ENCODE measurements at regions of chr17 and their contacts with region 1.

Region 1: DNA sequence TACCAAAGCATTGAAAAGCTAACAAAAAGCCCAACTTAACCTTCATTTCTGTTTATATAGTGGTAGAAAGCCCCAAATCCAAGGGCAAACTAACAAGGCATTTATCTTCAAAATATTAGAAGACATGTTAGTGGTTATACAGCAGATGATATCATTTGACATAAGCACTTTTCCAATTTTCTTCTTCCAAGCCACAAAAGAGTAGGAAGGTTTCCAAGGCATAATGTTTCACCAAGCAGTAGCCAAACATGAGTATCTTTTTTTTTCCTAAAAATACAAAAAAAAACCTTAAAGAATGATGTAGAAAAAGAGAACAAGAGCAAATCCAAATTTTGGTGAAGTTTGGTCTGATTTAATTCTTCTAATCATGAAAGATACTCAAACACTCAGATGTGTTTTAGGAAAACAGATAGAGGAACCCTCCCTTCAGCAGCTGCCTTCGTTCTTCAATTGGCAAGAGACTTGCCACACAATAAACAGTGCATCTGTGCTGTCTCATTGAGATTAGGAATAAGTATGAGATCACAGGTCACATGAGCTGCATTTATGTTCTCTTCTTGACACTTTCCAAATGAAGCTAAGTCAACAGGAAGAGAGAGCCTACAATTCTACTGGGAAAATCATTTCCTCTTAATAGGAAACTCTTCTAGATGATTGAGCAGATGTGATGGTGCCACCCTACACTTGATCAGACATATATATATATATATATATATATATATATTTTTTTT is 106.7 kb downstream of the TTC19 start:
- DNase-seq: no peak
- ATAC-seq: no peak
- H3K4me3 ChIP-seq: no peak overlapping the region
- H3K27ac ChIP-seq: no peak overlapping the region
- H3K4me1 ChIP-seq: peaks cover 18% of the 10 kb centered on the region
- H3K27me3 ChIP-seq: no peaks in the 10 kb centered on the region
- CTCF ChIP-seq: no peak

Region 2: GRCh38 chr17:16052486-16052885 is 53.8 kb before region 1 on chr17:
- CTCF ChIA-PET with region 1: no interaction called
- POLR2A ChIA-PET with region 1: no interaction called
- intact Hi-C with region 1: no loop called
- DNase-seq: no peak
- ATAC-seq: no peak
- H3K4me3 ChIP-seq: no peak overlapping the region
- H3K27ac ChIP-seq: no peak overlapping the region
- H3K4me1 ChIP-seq: no peaks in the 10 kb centered on the region
- H3K27me3 ChIP-seq: no peaks in the 10 kb centered on the region
- CTCF ChIP-seq: no peak

Region 3: GRCh38 chr17:16085066-16085699 is 21.1 kb before region 1 on chr17:
- CTCF ChIA-PET with region 1: no interaction called
- POLR2A ChIA-PET with region 1: no interaction called
- intact Hi-C with region 1: no loop called
- DNase-seq: peak; percentile 57
- ATAC-seq: peak; percentile 78
- H3K4me3 ChIP-seq: no peak overlapping the region
- H3K27ac ChIP-seq: peak overlapping the region; percentile 23
- H3K4me1 ChIP-seq: peaks cover 10% of the 10 kb centered on the region
- H3K27me3 ChIP-seq: no peaks in the 10 kb centered on the region
- CTCF ChIP-seq: no peak

Region 4: GRCh38 chr17:16122697-16123434 is 16.5 kb after region 1 on chr17:
- CTCF ChIA-PET with region 1: no interaction called
- POLR2A ChIA-PET with region 1: no interaction called
- intact Hi-C with region 1: no loop called
- DNase-seq: peak; percentile 73
- ATAC-seq: no peak; the same call in 1 of the 2 replicates
- H3K4me3 ChIP-seq: no peak overlapping the region
- H3K27ac ChIP-seq: no peak overlapping the region; the same call in 1 of the 2 replicates
- H3K4me1 ChIP-seq: peaks cover 21% of the 10 kb centered on the region
- H3K27me3 ChIP-seq: no peaks in the 10 kb centered on the region
- CTCF ChIP-seq: no peak

Region 5: GRCh38 chr17:16189791-16190348 is 83.5 kb after region 1 on chr17:
- CTCF ChIA-PET with region 1: no interaction called
- POLR2A ChIA-PET with region 1: no interaction called
- intact Hi-C with region 1: loop called (anchors 10 kb)
- DNase-seq: no peak
- ATAC-seq: no peak
- H3K4me3 ChIP-seq: no peak overlapping the region
- H3K27ac ChIP-seq: no peak overlapping the region
- H3K4me1 ChIP-seq: peaks cover 8% of the 10 kb centered on the region; the same call in 1 of the 2 replicates
- H3K27me3 ChIP-seq: no peaks in the 10 kb centered on the region
- CTCF ChIP-seq: no peak

Region 6: DNA sequence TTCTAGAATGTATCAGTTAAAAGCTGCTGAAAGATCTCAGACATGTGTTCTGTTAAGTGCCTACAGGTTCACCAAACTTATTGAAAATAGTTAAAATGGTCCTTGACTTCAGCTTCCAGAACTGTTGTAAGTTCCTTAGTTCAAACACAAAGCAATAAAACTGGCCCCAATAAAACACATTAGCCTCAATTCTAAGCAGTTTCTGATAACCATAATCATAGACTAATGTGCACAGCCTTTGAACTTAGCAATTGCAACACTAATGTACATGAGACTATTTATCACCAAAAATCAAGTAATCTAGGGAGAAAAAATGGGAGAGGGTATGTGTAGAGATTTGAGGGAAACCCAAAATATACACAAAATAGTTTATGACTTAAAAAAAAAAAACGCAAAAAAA is 126.1 kb after region 1 on chr17:
- CTCF ChIA-PET with region 1: no interaction called
- POLR2A ChIA-PET with region 1: no interaction called
- intact Hi-C with region 1: no loop called
- DNase-seq: no peak
- ATAC-seq: no peak
- H3K4me3 ChIP-seq: no peak overlapping the region
- H3K27ac ChIP-seq: no peak overlapping the region
- H3K4me1 ChIP-seq: peaks cover 15% of the 10 kb centered on the region
- H3K27me3 ChIP-seq: no peaks in the 10 kb centered on the region
- CTCF ChIP-seq: no peak

Measured in PC-3 (cell line).